Activated T-helper 1 cell treated with anti-CD3 and anti-CD28 coated beads, Interleukin-12 subunit alpha, Interleukin-12 subunit beta, Interleukin-2, Interleukin-4 antibody, amounts not matched to agents 30 ng/mL and 10 ng/mL and 1 ng/mL, durations not matched to agents 14 hours and 24 hours and 36 hours (primary cell): ENCODE measurements at regions of chr13 and their contacts with region 1.

Region 1: GRCh38 chr13:49976314-49977258 is 20.3 kb upstream of the TRIM13 start:
- DNase-seq: peak; percentile 56
- H3K4me3 Mint-ChIP-seq: no peak overlapping the region
- H3K27ac Mint-ChIP-seq: no peak overlapping the region
- H3K4me1 Mint-ChIP-seq: peaks cover 5% of the 10 kb centered on the region
- H3K27me3 Mint-ChIP-seq: no peaks in the 10 kb centered on the region

Region 2: DNA sequence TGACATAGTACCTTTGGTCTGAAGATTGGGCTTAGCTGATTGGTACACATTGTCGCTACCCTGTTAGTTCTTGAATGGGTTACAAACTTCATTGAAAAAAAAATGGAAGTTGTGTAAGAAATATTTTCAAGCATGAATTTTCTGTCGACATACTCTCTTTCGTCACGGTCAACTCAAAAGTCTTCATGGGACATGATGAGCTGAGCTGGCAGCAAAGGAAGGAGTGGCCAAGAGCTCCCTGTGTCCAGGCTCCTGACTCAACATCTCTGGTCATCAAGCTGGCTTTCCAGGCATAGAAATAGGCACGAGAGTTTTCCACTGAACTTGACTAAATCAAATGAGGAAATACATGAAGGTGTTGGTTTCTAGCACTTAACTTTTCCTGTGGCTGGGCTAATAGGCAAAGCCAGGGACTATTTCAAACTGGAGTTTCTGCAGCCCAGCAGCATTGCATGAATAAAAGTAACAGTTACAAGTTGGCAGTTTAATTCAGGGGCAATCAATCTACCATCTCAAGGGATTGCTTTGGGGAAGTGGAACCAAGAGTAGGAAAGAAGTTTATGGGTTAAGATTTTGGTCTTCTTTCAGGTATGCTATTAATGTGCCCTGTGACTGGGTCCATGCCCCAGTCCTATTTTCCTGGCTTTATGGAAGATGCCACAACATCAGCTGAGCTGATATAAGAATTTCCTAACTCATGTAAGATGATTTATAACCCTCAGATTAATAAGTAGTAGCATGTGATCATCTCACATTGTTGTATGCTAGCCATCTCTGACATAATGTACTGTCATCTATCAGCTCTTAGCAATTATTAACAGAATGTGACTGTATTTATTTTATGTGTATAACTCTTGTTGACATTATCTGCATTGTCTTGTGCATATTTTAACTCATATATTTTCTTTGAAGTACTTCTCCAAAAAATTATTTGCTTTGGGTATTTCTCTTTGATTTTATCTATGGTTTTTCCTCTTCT is 481.1 kb after region 1 on chr13:
- intact Hi-C with region 1: no loop called
- DNase-seq: no peak
- H3K4me3 Mint-ChIP-seq: no peak overlapping the region
- H3K27ac Mint-ChIP-seq: no peak overlapping the region
- H3K4me1 Mint-ChIP-seq: no peaks in the 10 kb centered on the region
- H3K27me3 Mint-ChIP-seq: peaks cover 7% of the 10 kb centered on the region

Region 3: DNA sequence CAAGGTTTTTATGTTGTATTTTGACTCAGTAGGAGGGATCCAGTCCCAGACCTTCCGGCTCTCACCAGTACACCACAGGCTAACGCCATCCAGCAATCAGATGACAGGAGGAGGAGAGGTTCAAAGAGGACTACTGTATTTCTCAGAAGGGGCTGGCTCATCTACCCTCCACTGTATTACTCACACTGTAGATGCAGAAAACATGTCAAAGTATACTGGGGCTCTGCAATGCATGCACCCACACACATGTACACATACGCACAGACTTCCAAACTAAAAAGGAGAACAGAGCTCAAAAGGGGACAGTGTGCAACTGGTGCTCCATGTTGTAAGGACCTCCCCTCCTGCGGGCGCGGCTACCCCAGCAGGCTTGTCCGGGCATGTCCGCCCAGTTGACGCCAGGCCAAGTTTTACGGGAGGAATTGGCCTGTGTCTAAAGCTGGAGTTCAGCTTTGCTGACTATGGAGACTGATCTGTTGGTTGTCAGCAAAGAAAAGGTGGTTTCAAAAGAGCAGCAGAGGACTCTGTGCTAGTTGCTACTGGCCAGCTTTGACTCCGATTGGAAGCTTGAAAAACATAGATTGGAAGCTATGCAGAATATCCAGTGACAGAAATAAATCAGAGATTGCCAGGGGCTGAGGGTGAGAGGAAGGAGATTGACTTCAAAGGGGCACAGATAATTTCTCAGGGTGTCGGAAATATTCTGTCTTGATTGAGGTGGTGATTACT is 552.7 kb after region 1 on chr13:
- intact Hi-C with region 1: loop called (anchors 1 kb)
- DNase-seq: no peak
- H3K4me3 Mint-ChIP-seq: no peak overlapping the region
- H3K27ac Mint-ChIP-seq: peak overlapping the region; percentile 59
- H3K4me1 Mint-ChIP-seq: peaks cover 45% of the 10 kb centered on the region
- H3K27me3 Mint-ChIP-seq: peaks cover 19% of the 10 kb centered on the region